SK-N-SH (cell line): ENCODE measurements at regions of chr9 and their contacts with region 1.

Region 1: DNA sequence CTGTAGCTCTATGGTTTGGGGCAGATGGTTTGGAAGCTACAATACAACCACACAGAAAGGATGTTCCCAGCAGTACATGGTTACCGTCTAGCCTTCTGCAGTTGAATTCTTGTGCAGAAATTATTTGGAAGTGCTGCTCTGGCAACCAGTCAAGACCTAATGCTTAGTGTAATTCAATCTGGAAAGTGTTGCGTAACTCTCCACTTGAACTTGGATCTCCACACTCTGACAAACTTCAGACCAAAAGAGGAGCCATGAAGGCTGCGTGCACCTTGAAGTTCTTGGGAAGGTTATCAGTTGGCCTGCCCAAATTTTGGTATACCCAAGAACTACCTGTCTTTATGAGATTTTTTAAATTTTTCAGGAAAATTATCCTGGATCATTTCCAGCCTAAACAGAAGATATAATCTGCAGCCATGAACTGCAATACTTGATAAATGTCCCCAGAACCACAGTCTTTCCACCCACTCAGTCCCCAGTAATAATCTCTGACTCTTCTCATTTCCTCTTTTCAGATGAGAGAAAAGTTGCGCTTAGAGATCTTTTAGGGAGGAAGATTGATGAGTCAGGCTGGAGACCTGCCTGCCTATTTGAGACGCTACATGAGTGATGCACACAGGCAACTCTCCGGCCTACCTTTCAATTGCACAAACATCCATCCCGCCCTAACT is 159.9 kb downstream of the FANCC start:
- DNase-seq: peak; percentile 53
- H3K4me3 ChIP-seq: peak overlapping the region in 1 of 2 experiments; percentile 25; a peak in 2 of 4 replicates
- H3K27ac ChIP-seq: peak overlapping the region; percentile 82 to 95
- H3K4me1 ChIP-seq: peaks cover 27 to 28% of the 10 kb centered on the region in 2 experiments
- H3K27me3 ChIP-seq: no peaks in the 10 kb centered on the region
- CTCF ChIP-seq: no peak
- EP300 ChIP-seq: peak; percentile 58 to 62; a peak in 3 of 4 replicates
- RAD21 ChIP-seq: no peak

Region 2: DNA sequence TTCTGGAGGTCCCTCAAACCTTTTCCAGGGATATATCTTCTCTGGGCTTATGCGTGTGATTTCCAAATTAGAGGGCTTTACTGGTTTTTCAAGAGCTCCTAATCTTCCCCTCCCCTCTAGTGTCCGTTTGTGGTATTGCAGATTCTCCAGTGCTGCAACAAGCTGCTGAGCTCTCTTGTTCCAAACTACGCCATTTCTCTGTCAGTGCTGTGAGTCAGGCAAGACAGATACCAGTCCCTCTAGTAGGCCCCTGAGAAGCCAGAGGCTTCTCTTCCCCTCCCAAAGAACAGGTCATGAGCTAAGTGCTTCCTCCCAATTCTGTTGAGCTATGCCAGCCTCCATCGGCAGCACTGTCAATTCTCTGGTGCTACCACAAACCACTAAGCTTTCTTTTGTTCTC is 10.4 kb after region 1 on chr9:
- CTCF ChIA-PET with region 1: interaction called, 10 read pairs
- POLR2A ChIA-PET with region 1: no interaction called
- DNase-seq: peak; percentile 26
- H3K4me3 ChIP-seq: no peak overlapping the region
- H3K27ac ChIP-seq: no peak overlapping the region; a peak in 1 of 4 replicates
- H3K4me1 ChIP-seq: peaks cover 9 to 18% of the 10 kb centered on the region in 2 experiments; a peak in 3 of 4 replicates
- H3K27me3 ChIP-seq: no peaks in the 10 kb centered on the region
- CTCF ChIP-seq: peak; percentile 74
- EP300 ChIP-seq: no peak
- RAD21 ChIP-seq: peak; percentile 66